IMR-90 (cell line): ENCODE measurements at regions of chr6 and their contacts with region 1.

Region 1: GRCh38 chr6:91438570-91438969 is 851.7 kb upstream of the MAP3K7 start:
- DNase-seq: peak; percentile 84
- ATAC-seq: peak; percentile 78
- H3K4me3 ChIP-seq: no peak overlapping the region
- H3K27ac ChIP-seq: peak overlapping the region; percentile 16; the same call in 1 of the 2 replicates
- H3K4me1 ChIP-seq: peaks cover 21% of the 10 kb centered on the region
- H3K27me3 ChIP-seq: no peaks in the 10 kb centered on the region
- CTCF ChIP-seq: no peak
- POLR2A ChIP-seq: no peak
- RAD21 ChIP-seq: no peak

Region 2: GRCh38 chr6:90947184-90948064 is 491.1 kb before region 1 on chr6:
- CTCF ChIA-PET with region 1: no interaction called
- POLR2A ChIA-PET with region 1: no interaction called
- dilution Hi-C with region 1: no loop called
- in situ Hi-C with region 1: no loop called
- intact Hi-C with region 1: no loop called
- DNase-seq: no peak
- ATAC-seq: no peak
- H3K4me3 ChIP-seq: no peak overlapping the region
- H3K27ac ChIP-seq: no peak overlapping the region
- H3K4me1 ChIP-seq: no peaks in the 10 kb centered on the region
- H3K27me3 ChIP-seq: no peaks in the 10 kb centered on the region
- CTCF ChIP-seq: no peak
- POLR2A ChIP-seq: no peak
- RAD21 ChIP-seq: no peak

Region 3: DNA sequence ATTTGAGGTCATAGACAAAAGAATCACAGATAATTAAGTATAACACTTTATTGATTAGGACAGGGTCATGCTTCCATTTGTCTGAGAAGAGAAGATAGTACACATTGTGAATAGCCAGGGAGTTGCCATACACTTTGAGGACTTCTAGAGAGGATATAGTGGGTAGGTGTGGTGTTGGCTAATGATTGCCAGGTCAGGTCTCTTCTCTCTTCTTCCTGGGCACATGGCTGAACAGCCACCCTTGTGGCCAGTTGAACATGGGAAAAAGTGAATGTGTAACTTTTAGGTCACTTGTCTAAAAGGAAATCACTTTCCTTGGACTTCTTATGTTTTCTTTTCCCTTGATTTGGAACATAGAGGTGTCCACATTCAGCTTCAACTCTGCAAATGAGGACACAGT is 79.6 kb before region 1 on chr6:
- CTCF ChIA-PET with region 1: no interaction called
- POLR2A ChIA-PET with region 1: no interaction called
- dilution Hi-C with region 1: no loop called
- in situ Hi-C with region 1: no loop called
- intact Hi-C with region 1: loop called (anchors 5 kb)
- DNase-seq: no peak
- ATAC-seq: no peak
- H3K4me3 ChIP-seq: no peak overlapping the region
- H3K27ac ChIP-seq: no peak overlapping the region
- H3K4me1 ChIP-seq: no peaks in the 10 kb centered on the region
- H3K27me3 ChIP-seq: no peaks in the 10 kb centered on the region
- CTCF ChIP-seq: no peak
- POLR2A ChIP-seq: no peak
- RAD21 ChIP-seq: no peak

Region 4: GRCh38 chr6:91575032-91575431 is 136.5 kb after region 1 on chr6:
- CTCF ChIA-PET with region 1: no interaction called
- POLR2A ChIA-PET with region 1: no interaction called
- dilution Hi-C with region 1: no loop called
- in situ Hi-C with region 1: no loop called
- intact Hi-C with region 1: loop called (anchors 5 kb)
- DNase-seq: peak; percentile 15
- ATAC-seq: peak; percentile 82
- H3K4me3 ChIP-seq: no peak overlapping the region
- H3K27ac ChIP-seq: no peak overlapping the region
- H3K4me1 ChIP-seq: no peaks in the 10 kb centered on the region
- H3K27me3 ChIP-seq: no peaks in the 10 kb centered on the region
- CTCF ChIP-seq: no peak
- POLR2A ChIP-seq: no peak
- RAD21 ChIP-seq: no peak

Region 5: GRCh38 chr6:93419304-93420162 is 1981.0 kb after region 1 on chr6 and contains the start of gene EPHA7:
- CTCF ChIA-PET with region 1: no interaction called
- POLR2A ChIA-PET with region 1: no interaction called
- dilution Hi-C with region 1: no loop called
- in situ Hi-C with region 1: no loop called
- intact Hi-C with region 1: loop called (anchors 10 kb)
- DNase-seq: peak; percentile 76
- ATAC-seq: peak; percentile 98
- H3K4me3 ChIP-seq: peak within 1 kb of the TSS; percentile 32
- H3K27ac ChIP-seq: no peak within 1 kb of the TSS
- H3K4me1 ChIP-seq: no peaks in the 10 kb centered on the region; the same call in 1 of the 2 replicates
- H3K27me3 ChIP-seq: peaks cover 29% of the 10 kb centered on the region
- CTCF ChIP-seq: no peak
- POLR2A ChIP-seq: no peak
- RAD21 ChIP-seq: no peak
- total RNA-seq, gene EPHA7: not detected in 2 replicates